PC-9 (cell line): ENCODE measurements at regions of chr9 and their contacts with region 1.

Region 1: DNA sequence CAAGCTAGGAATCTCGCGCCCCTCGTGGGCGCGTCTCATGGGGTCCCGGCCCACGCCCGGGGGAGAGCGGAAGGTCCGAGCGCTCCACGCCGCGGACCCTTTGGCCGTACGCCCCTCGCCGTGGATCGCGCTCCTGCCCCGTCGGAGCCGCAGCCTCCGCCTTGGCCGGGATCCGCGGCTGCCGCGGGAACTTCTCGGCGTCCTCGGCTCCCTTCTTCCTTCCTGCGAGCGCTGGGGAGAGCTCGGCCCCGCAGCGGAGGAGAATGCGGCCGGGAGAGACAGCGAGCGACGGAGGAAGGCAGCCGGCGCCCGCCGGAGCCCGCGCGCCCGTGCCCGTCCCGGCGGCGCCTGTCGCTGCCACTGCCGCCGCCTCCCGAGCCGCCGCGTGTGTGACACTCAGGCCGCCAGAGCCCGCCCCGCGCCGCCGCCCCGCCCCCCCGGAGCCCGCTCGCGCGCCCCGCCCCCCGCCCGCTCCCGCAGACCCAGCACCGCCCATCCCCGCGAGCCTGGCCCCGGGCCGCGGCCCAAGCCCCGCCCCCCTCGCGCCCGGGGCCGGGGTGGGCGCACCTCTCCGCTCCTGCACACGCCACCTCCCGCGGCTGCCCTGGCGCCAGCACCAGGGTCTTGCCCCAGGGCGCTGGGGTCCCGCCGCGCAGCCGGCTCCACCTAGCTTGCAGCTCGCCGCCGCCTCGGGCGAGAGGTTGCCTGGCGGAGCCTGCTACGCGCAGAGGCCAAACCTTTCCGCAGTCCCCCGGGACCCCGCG is at the start of gene SHB:
- DNase-seq: peak in 1 of 2 experiments; percentile 74
- H3K4me3 ChIP-seq: peak within 1 kb of the TSS; percentile 90
- H3K27ac ChIP-seq: peak within 1 kb of the TSS; percentile 91
- H3K4me1 ChIP-seq: peaks cover 43% of the 10 kb centered on the region
- H3K27me3 ChIP-seq: no peaks in the 10 kb centered on the region
- CTCF ChIP-seq: no peak; the same call in 1 of the 2 replicates
- total RNA-seq, gene SHB: 22.7 and 23.8 TPM in 2 replicates

Region 2: DNA sequence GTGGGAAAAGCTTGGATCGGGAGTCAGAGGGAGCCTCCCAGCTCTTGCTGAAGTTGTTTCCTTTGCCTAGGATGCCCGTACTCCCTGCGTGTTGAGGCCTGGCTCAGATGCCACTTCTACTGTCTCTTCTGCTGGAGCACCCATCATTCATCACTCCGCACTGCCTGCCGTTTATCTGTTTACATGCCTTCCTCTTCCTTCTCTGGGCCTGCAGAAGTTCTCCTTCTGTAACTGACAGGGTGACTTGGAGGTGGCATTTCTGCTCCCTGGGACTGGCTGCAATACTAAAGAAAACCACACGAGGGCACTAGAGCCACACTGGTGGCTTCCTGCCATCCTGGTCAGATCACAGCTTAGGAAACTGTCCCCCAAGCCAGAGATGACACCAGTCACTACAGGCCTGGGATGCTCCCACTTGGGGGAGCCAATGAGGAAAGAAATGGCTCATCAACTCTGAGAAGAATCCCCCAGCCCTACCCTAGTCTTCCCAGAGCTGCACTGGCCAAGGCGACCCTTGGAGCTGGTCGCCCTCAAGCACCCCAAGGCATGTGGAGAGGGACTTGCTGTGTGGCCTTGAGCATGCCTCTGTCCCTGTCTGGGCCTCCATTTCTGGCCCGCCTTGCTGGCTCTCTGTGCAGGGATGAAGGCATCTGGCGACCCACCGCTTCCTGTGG is 155.4 kb before region 1 on chr9:
- CTCF ChIA-PET with region 1: interaction called, 17 read pairs
- POLR2A ChIA-PET with region 1: no interaction called
- intact Hi-C with region 1: loop called (anchors 2 kb)
- DNase-seq: peak; percentile 50 to 77
- H3K4me3 ChIP-seq: no peak overlapping the region
- H3K27ac ChIP-seq: no peak overlapping the region
- H3K4me1 ChIP-seq: peaks cover 13% of the 10 kb centered on the region
- H3K27me3 ChIP-seq: no peaks in the 10 kb centered on the region
- CTCF ChIP-seq: peak; percentile 90

Region 3: DNA sequence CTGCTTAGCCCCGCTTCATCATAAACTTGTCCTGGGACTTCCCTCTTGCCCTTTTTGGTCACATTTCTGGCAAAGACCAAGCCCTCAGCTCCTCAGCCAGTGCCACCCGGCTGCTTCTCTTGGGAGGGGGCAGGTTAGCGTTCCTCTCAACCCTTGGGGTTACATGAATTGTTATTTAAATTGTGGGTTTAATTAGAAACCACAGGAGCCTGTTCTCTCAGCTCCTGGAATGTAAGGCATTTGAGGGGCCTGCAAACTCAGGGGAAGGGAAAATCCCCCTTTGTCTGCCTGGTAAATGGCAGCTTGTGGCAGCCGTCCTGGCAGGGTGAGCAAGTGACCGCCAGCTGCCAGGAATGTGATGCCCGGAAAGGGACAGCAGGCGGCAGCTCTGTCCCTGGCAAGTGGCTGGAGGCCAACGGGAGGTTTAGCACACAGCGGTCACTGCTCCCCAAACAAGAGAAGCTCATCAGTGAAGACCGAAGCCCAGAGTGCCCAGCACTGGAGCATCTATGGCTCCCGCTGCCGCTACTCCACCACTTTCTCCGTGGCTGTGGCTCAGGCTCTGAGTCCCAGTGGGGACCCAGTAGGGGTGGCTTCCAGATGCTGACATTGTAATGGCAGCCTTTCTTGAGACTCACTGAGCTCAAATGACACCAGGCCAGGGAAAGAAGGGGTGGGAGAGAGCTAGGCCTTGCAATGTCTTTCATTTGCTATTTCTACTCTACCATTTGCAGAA is 51.7 kb before region 1 on chr9:
- CTCF ChIA-PET with region 1: no interaction called
- POLR2A ChIA-PET with region 1: interaction called, 5 read pairs
- intact Hi-C with region 1: loop called (anchors 1 kb)
- DNase-seq: peak; percentile 51 to 80
- H3K4me3 ChIP-seq: no peak overlapping the region
- H3K27ac ChIP-seq: peak overlapping the region; percentile 85
- H3K4me1 ChIP-seq: peaks cover 64% of the 10 kb centered on the region
- H3K27me3 ChIP-seq: no peaks in the 10 kb centered on the region
- CTCF ChIP-seq: peak; percentile 39

Region 4: GRCh38 chr9:38079461-38080031 is 10.5 kb after region 1 on chr9:
- CTCF ChIA-PET with region 1: no interaction called
- POLR2A ChIA-PET with region 1: no interaction called
- intact Hi-C with region 1: loop called (anchors 2 kb)
- DNase-seq: no peak
- H3K4me3 ChIP-seq: no peak overlapping the region
- H3K27ac ChIP-seq: no peak overlapping the region
- H3K4me1 ChIP-seq: peaks cover 25% of the 10 kb centered on the region
- H3K27me3 ChIP-seq: no peaks in the 10 kb centered on the region
- CTCF ChIP-seq: no peak

Region 5: DNA sequence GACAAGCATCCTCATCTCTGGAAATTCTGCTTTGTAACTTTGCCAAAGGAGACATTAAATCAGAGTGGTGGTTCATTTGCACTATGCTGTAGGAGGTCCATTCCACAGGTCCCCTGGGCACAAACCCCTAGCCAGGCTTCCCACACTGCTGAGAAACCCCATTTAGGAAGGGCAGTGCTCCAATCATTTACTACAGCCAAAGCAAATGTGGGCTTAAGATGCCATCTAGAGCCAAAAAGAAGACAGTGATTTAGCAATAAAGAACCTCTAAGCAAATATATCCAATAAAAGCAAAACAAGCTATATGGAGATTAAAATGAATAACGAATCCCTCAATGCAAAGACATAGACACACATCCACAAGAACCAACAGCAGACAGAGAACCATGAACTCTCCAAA is 194.5 kb after region 1 on chr9:
- CTCF ChIA-PET with region 1: no interaction called
- POLR2A ChIA-PET with region 1: no interaction called
- intact Hi-C with region 1: loop called (anchors 5 kb)
- DNase-seq: peak in 1 of 2 experiments; percentile 37
- H3K4me3 ChIP-seq: no peak overlapping the region
- H3K27ac ChIP-seq: no peak overlapping the region
- H3K4me1 ChIP-seq: no peaks in the 10 kb centered on the region; the same call in 1 of the 2 replicates
- H3K27me3 ChIP-seq: no peaks in the 10 kb centered on the region
- CTCF ChIP-seq: peak; percentile 59